Adrenal gland (tissue), 19 donors: ENCODE measurements at regions of chr14 and their contacts with region 1.

Region 1: GRCh38 chr14:105709281-105710118 is 183.1 kb downstream of the TMEM121 start:
- DNase-seq: no peak
- H3K4me3 ChIP-seq: no peak overlapping the region
- H3K27ac ChIP-seq: no peak overlapping the region
- H3K4me1 ChIP-seq: no peaks in the 10 kb centered on the region
- H3K27me3 ChIP-seq: no peaks in the 10 kb centered on the region
- CTCF ChIP-seq: no peak
- POLR2A ChIP-seq: no peak

Region 2: DNA sequence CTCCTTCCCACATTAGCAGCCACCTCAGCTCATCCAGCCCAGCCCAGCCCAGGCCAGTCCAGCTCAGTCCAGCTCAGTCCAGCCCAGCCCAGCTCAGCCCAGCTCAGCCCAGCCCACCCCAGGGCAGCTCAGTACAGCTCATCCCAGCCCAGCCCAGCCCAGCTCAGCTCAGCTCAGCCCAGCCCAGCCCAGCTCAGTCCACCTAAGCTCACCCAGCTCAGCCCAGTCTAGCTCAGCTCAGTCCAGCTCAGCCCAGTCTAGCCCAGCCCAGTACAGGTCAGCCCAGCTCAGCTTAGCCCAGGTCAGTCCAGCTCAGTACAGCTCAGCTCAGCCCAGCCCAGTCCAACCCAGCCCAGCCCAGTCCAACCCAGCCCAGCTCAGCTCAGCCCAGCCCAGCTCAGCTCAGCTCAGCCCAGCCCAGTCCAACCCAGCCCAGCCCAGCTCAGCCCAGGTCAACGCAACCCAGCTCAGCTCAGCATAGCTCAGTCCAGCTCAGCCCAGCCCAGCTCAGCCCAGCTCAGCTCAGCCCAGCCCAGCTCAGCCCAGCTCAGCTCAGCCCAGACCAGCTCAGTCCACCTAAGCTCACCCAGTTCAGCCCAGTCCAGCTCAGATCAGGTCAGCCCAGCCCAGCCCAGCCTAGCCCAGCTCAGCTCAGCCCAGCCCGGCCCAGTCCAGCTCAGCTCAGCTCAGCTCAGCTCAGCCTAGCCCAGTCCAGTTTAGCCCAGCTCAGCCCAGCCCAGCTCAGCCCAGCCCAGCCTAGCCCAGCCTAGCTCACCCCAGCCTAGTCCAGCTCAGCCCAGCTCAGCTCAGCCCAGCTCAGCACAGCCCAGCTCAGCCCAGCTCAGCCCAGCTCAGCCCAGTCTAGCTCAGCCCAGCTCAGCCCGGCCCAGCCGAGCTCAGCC is 120.1 kb before region 1 on chr14:
- intact Hi-C with region 1: loop called in 1 of 2 experiments (anchors 5 kb)
- DNase-seq: no peak
- H3K4me3 ChIP-seq: no peak overlapping the region
- H3K27ac ChIP-seq: no peak overlapping the region
- H3K4me1 ChIP-seq: no peaks in the 10 kb centered on the region
- H3K27me3 ChIP-seq: no peaks in the 10 kb centered on the region
- CTCF ChIP-seq: no peak
- POLR2A ChIP-seq: no peak

Region 3: GRCh38 chr14:105889701-105890473 is 180.4 kb after region 1 on chr14:
- intact Hi-C with region 1: no loop called
- DNase-seq: peak in 2 of 7 donors; percentile 1 to 58
- H3K4me3 ChIP-seq: no peak overlapping the region
- H3K27ac ChIP-seq: no peak overlapping the region
- H3K4me1 ChIP-seq: no peaks in the 10 kb centered on the region
- H3K27me3 ChIP-seq: no peaks in the 10 kb centered on the region
- CTCF ChIP-seq: no peak
- POLR2A ChIP-seq: no peak